Naive thymus-derived CD4-positive, alpha-beta T cell (primary cell): ENCODE measurements at regions of chr6 and their contacts with region 1.

Region 1: GRCh38 chr6:63352587-63353285 is 33.0 kb upstream of the LGSN start:
- DNase-seq: no peak
- ATAC-seq: peak; percentile 86
- H3K4me3 ChIP-seq: no peak overlapping the region
- H3K4me3 Mint-ChIP-seq: peak overlapping the region in 2 of 10 donors; percentile 22 to 66
- H3K27ac ChIP-seq: no peak overlapping the region
- H3K27ac Mint-ChIP-seq: peak overlapping the region in 2 of 9 donors; percentile 13 to 48
- H3K4me1 ChIP-seq: no peaks in the 10 kb centered on the region
- H3K4me1 Mint-ChIP-seq: peaks cover 0 to 15% (median 7%) of the 10 kb centered on the region in 7 donors
- H3K27me3 ChIP-seq: no peaks in the 10 kb centered on the region
- H3K27me3 Mint-ChIP-seq: peaks cover 10 to 27% (median 21%) of the 10 kb centered on the region in 5 donors

Region 2: GRCh38 chr6:63527658-63528514 is 175.2 kb after region 1 on chr6:
- CTCF ChIA-PET with region 1: no interaction called
- POLR2A ChIA-PET with region 1: no interaction called
- intact Hi-C with region 1: loop called in 1 of 2 experiments (anchors 10 kb)
- DNase-seq: no peak
- ATAC-seq: no peak
- H3K4me3 ChIP-seq: no peak overlapping the region
- H3K4me3 Mint-ChIP-seq: peak overlapping the region in 1 of 10 donors; percentile 23
- H3K27ac ChIP-seq: no peak overlapping the region
- H3K27ac Mint-ChIP-seq: peak overlapping the region in 1 of 9 donors; percentile 71
- H3K4me1 ChIP-seq: no peaks in the 10 kb centered on the region
- H3K4me1 Mint-ChIP-seq: peaks cover 2 to 43% (median 10%) of the 10 kb centered on the region in 7 donors
- H3K27me3 ChIP-seq: no peaks in the 10 kb centered on the region
- H3K27me3 Mint-ChIP-seq: no peaks in the 10 kb centered on the region

Region 3: GRCh38 chr6:63802606-63803206 is 450.0 kb after region 1 on chr6:
- CTCF ChIA-PET with region 1: no interaction called
- POLR2A ChIA-PET with region 1: no interaction called
- intact Hi-C with region 1: loop called in 1 of 2 experiments (anchors 2 kb)
- DNase-seq: no peak
- ATAC-seq: no peak
- H3K4me3 ChIP-seq: no peak overlapping the region
- H3K4me3 Mint-ChIP-seq: no peak overlapping the region
- H3K27ac ChIP-seq: no peak overlapping the region
- H3K27ac Mint-ChIP-seq: no peak overlapping the region
- H3K4me1 ChIP-seq: no peaks in the 10 kb centered on the region
- H3K4me1 Mint-ChIP-seq: peaks cover 0 to 3% (median 0%) of the 10 kb centered on the region in 7 donors
- H3K27me3 ChIP-seq: no peaks in the 10 kb centered on the region
- H3K27me3 Mint-ChIP-seq: peaks cover 2 to 12% (median 5%) of the 10 kb centered on the region in 5 donors